Activated CD4-positive, alpha-beta T cell treated with anti-CD3 and anti-CD28 coated beads for 36 hours (primary cell): ENCODE measurements at regions of chr15 and their contacts with region 1.

Region 1: DNA sequence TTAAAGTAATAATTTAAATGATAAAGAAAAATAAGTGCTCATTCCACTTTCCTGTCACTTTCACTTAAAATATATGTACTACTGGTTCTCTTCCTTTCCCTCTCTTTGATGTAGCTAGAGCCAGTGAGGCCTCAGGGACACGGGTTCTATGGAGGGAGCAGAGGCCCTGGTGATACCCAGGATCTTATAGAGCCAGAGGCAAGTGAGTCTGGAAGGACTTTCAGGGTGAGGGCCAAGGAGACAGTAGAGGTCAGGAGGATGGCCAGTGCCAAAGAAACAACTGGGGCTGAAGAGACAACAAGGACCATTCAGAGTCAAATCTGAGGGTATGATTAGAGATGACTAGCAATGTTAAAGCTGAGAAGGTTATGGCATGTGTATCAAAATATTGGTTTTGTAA is 124.0 kb upstream of the GOLGA6L6 start:
- DNase-seq: no peak
- ATAC-seq: no peak
- H3K4me3 Mint-ChIP-seq: no peak overlapping the region
- H3K27ac Mint-ChIP-seq: no peak overlapping the region
- H3K4me1 Mint-ChIP-seq: no peaks in the 10 kb centered on the region
- H3K27me3 Mint-ChIP-seq: no peaks in the 10 kb centered on the region

Region 2: DNA sequence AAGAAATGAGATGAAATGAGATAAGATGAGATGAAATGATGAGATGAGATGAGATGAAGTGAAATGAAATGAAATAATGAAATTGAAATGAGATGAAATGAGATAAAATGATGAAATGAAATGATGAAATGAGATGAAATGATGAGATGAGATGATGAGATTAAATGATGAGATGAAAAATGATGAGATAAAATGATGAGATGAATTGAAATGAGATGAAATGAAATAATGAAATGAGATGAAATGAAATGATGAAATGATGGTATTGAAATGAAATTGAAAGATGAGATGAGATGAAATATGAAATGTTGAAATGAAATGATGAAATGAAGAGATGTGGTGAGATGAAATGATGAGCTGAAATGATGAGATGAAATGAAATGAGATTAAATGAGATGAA is 355.0 kb before region 1 on chr15:
- CTCF ChIA-PET with region 1: no interaction called
- POLR2A ChIA-PET with region 1: no interaction called
- intact Hi-C with region 1: no loop called
- DNase-seq: no peak
- ATAC-seq: no peak
- H3K4me3 Mint-ChIP-seq: no peak overlapping the region
- H3K27ac Mint-ChIP-seq: no peak overlapping the region
- H3K4me1 Mint-ChIP-seq: no peaks in the 10 kb centered on the region
- H3K27me3 Mint-ChIP-seq: no peaks in the 10 kb centered on the region

Region 3: DNA sequence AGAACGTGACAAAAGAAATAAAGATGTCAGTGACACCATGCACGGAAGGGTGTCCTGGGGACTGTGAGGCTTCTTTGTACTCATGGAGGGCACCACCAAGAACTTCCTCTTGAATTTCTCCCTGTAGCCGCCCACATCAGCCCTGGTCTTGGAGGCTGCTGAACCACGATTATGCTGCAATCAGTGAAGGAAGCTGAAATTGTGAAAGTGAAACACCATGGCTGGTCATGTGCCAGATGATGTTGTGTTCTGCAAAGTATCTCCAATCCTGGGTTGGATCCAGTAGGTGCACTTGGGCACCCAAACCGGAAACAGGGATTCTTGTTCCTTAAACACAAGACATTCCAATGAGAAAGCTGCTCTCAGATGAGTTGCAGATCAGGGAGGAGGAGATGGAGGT is 19.7 kb before region 1 on chr15:
- CTCF ChIA-PET with region 1: interaction called, 3 read pairs
- POLR2A ChIA-PET with region 1: no interaction called
- intact Hi-C with region 1: loop called in 1 of 2 experiments (anchors 1 kb)
- DNase-seq: peak; percentile 61
- ATAC-seq: peak; percentile 78
- H3K4me3 Mint-ChIP-seq: no peak overlapping the region
- H3K27ac Mint-ChIP-seq: no peak overlapping the region
- H3K4me1 Mint-ChIP-seq: no peaks in the 10 kb centered on the region
- H3K27me3 Mint-ChIP-seq: peaks cover 17% of the 10 kb centered on the region